ENCODE measurements at regions of chr13 and their contacts with region 1.

Region 1: GRCh38 chr13:25286969-25287961 is at the start of gene MTMR6:
- DNase-seq: peak; percentile 99
- ATAC-seq: peak; percentile 87
- H3K4me3 Mint-ChIP-seq: peak within 1 kb of the TSS; percentile 91
- H3K27ac Mint-ChIP-seq: peak within 1 kb of the TSS; percentile 95
- H3K4me1 Mint-ChIP-seq: peaks cover 40% of the 10 kb centered on the region
- H3K27me3 Mint-ChIP-seq: peaks cover 13% of the 10 kb centered on the region
- CTCF ChIP-seq: peak; percentile 95
- total RNA-seq, gene MTMR6: 18.3 and 19.8 TPM in 2 replicates

Region 2: GRCh38 chr13:24148399-24149305 is 1138.6 kb before region 1 on chr13:
- CTCF ChIA-PET with region 1: no interaction called
- POLR2A ChIA-PET with region 1: no interaction called
- intact Hi-C with region 1: no loop called
- DNase-seq: no peak
- ATAC-seq: no peak
- H3K4me3 Mint-ChIP-seq: no peak overlapping the region
- H3K27ac Mint-ChIP-seq: no peak overlapping the region
- H3K4me1 Mint-ChIP-seq: no peaks in the 10 kb centered on the region
- H3K27me3 Mint-ChIP-seq: peaks cover 14% of the 10 kb centered on the region
- CTCF ChIP-seq: no peak

Region 3: GRCh38 chr13:25018729-25019115 is 268.5 kb before region 1 on chr13:
- CTCF ChIA-PET with region 1: no interaction called
- POLR2A ChIA-PET with region 1: no interaction called
- intact Hi-C with region 1: loop called (anchors 5 kb)
- DNase-seq: no peak
- ATAC-seq: no peak
- H3K4me3 Mint-ChIP-seq: peak overlapping the region; percentile 48
- H3K27ac Mint-ChIP-seq: no peak overlapping the region
- H3K4me1 Mint-ChIP-seq: peaks cover 11% of the 10 kb centered on the region
- H3K27me3 Mint-ChIP-seq: peaks cover 8% of the 10 kb centered on the region
- CTCF ChIP-seq: no peak

Region 4: GRCh38 chr13:25097426-25097825 is 189.8 kb before region 1 on chr13:
- CTCF ChIA-PET with region 1: no interaction called
- POLR2A ChIA-PET with region 1: no interaction called
- intact Hi-C with region 1: no loop called
- DNase-seq: no peak
- ATAC-seq: no peak
- H3K4me3 Mint-ChIP-seq: no peak overlapping the region
- H3K27ac Mint-ChIP-seq: no peak overlapping the region
- H3K4me1 Mint-ChIP-seq: peaks cover 3% of the 10 kb centered on the region
- H3K27me3 Mint-ChIP-seq: peaks cover 34% of the 10 kb centered on the region
- CTCF ChIP-seq: no peak

Region 5: GRCh38 chr13:25180775-25181537 is 106.3 kb before region 1 on chr13:
- CTCF ChIA-PET with region 1: no interaction called
- POLR2A ChIA-PET with region 1: interaction called, 5 read pairs
- intact Hi-C with region 1: loop called (anchors 5 kb)
- DNase-seq: no peak
- ATAC-seq: peak; percentile 51
- H3K4me3 Mint-ChIP-seq: peak overlapping the region; percentile 3
- H3K27ac Mint-ChIP-seq: peak overlapping the region; percentile 27
- H3K4me1 Mint-ChIP-seq: peaks cover 41% of the 10 kb centered on the region
- H3K27me3 Mint-ChIP-seq: peaks cover 10% of the 10 kb centered on the region
- CTCF ChIP-seq: no peak

Region 6: GRCh38 chr13:25203127-25203740 is 84.0 kb before region 1 on chr13:
- CTCF ChIA-PET with region 1: no interaction called
- POLR2A ChIA-PET with region 1: no interaction called
- intact Hi-C with region 1: no loop called
- DNase-seq: no peak
- ATAC-seq: no peak
- H3K4me3 Mint-ChIP-seq: no peak overlapping the region
- H3K27ac Mint-ChIP-seq: no peak overlapping the region
- H3K4me1 Mint-ChIP-seq: no peaks in the 10 kb centered on the region
- H3K27me3 Mint-ChIP-seq: peaks cover 7% of the 10 kb centered on the region
- CTCF ChIP-seq: no peak

Region 7: GRCh38 chr13:25249001-25249543 is 38.2 kb before region 1 on chr13:
- CTCF ChIA-PET with region 1: no interaction called
- POLR2A ChIA-PET with region 1: no interaction called
- intact Hi-C with region 1: loop called (anchors 5 kb)
- DNase-seq: no peak
- ATAC-seq: no peak
- H3K4me3 Mint-ChIP-seq: no peak overlapping the region
- H3K27ac Mint-ChIP-seq: no peak overlapping the region
- H3K4me1 Mint-ChIP-seq: peaks cover 25% of the 10 kb centered on the region
- H3K27me3 Mint-ChIP-seq: no peaks in the 10 kb centered on the region
- CTCF ChIP-seq: no peak

Region 8: DNA sequence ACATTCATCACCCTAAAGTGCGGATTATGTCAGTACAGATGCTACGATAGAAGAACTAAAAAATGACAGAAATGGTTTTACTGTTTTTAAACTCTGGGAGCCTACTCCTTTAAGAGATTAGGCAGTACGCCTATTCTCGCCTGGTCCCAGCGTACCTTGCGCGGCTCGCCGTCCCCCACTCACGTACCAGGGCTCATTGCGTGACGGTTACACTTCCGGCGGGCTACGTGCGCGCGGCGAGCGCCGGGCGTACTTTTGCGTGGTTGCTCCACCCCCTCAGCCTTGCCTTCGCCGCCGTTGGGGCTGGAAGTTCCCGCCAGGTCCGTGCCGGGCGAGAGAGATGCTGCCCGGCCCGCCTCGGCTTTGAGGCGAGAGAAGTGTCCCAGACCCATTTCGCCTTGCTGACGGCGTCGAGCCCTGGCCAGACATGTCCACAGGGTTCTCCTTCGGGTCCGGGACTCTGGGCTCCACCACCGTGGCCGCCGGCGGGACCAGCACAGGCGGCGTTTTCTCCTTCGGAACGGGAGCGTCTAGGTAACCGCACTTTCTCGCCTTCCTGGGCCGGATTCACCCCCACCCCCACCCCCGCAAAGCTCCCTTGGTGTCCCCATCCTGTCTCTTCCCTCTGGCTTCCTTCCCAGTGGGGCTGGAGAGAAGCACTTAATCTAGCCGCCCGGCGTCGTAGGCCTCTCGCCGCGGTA is 14.2 kb after region 1 on chr13 and contains the start of gene NUP58:
- CTCF ChIA-PET with region 1: interaction called, 3 read pairs
- POLR2A ChIA-PET with region 1: interaction called, 21 read pairs
- intact Hi-C with region 1: loop called (anchors 1 kb)
- DNase-seq: peak; percentile 89
- ATAC-seq: peak; percentile 99
- H3K4me3 Mint-ChIP-seq: peak within 1 kb of the TSS; percentile 91
- H3K27ac Mint-ChIP-seq: peak within 1 kb of the TSS; percentile 91
- H3K4me1 Mint-ChIP-seq: peaks cover 32% of the 10 kb centered on the region
- H3K27me3 Mint-ChIP-seq: peaks cover 19% of the 10 kb centered on the region
- CTCF ChIP-seq: no peak
- total RNA-seq, gene NUP58: 44.8 and 48.4 TPM in 2 replicates

Measured in activated B cell treated with CpG ODN at 0.5 μM for 24 hours (primary cell).